Caco-2 (cell line): ENCODE measurements at regions of chr11 and their contacts with region 1.

Region 1: DNA sequence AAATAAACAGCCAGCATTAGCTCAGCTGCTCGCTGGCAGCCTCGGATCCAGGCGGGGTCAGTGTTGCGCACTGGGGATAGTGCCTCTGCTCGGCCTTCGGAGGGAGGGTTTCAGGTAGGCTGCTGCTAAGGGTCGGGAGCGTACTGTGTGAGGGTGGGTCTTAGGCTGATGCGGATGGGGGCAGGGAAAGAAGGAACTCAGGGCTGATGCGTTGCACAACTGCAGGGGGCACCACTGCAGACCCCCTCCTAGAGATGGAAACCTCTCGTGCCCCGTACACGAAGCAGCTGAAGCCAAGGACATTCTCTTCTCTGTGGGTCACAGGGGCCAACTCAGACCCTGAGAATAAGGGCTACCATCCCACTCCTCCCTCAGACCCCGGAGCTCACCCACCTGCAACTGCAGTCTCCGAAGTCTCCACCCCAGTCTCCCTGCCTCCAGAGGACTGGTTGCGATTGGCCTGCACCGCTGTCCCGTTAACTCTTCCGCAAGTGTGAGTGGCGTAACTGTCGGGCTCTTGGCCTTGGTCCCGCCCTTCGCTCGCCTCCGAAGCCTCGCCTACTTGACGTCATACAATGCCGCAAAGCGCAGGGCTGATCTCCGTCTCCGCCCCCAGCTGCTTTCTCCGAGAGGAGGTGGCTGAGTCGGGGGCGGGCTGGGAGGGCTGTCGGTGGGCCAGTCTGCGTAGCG is at the start of gene KBTBD3:
- DNase-seq: peak; percentile 100
- H3K4me3 ChIP-seq: peak within 1 kb of the TSS; percentile 99
- H3K4me3 Mint-ChIP-seq: peak within 1 kb of the TSS; percentile 94
- H3K27ac Mint-ChIP-seq: peak within 1 kb of the TSS; percentile 94
- H3K4me1 ChIP-seq: peaks cover 19% of the 10 kb centered on the region
- H3K4me1 Mint-ChIP-seq: peaks cover 18% of the 10 kb centered on the region
- H3K27me3 ChIP-seq: no peaks in the 10 kb centered on the region
- H3K27me3 Mint-ChIP-seq: no peaks in the 10 kb centered on the region
- CTCF ChIP-seq: peak; percentile 34 to 72
- total RNA-seq, gene KBTBD3: 3.2 and 5.6 TPM in 2 replicates

Region 2: GRCh38 chr11:105447936-105448702 is 628.9 kb before region 1 on chr11:
- CTCF ChIA-PET with region 1: no interaction called
- POLR2A ChIA-PET with region 1: no interaction called
- intact Hi-C with region 1: no loop called
- DNase-seq: no peak
- H3K4me3 ChIP-seq: no peak overlapping the region
- H3K4me3 Mint-ChIP-seq: no peak overlapping the region
- H3K27ac Mint-ChIP-seq: no peak overlapping the region
- H3K4me1 ChIP-seq: no peaks in the 10 kb centered on the region
- H3K4me1 Mint-ChIP-seq: no peaks in the 10 kb centered on the region
- H3K27me3 ChIP-seq: no peaks in the 10 kb centered on the region
- H3K27me3 Mint-ChIP-seq: no peaks in the 10 kb centered on the region
- CTCF ChIP-seq: no peak

Region 3: GRCh38 chr11:105953886-105954285 is 123.2 kb before region 1 on chr11:
- CTCF ChIA-PET with region 1: no interaction called
- POLR2A ChIA-PET with region 1: no interaction called
- intact Hi-C with region 1: loop called (anchors 5 kb)
- DNase-seq: no peak
- H3K4me3 ChIP-seq: no peak overlapping the region
- H3K4me3 Mint-ChIP-seq: no peak overlapping the region
- H3K27ac Mint-ChIP-seq: no peak overlapping the region
- H3K4me1 ChIP-seq: no peaks in the 10 kb centered on the region
- H3K4me1 Mint-ChIP-seq: no peaks in the 10 kb centered on the region
- H3K27me3 ChIP-seq: no peaks in the 10 kb centered on the region
- H3K27me3 Mint-ChIP-seq: no peaks in the 10 kb centered on the region
- CTCF ChIP-seq: no peak

Region 4: DNA sequence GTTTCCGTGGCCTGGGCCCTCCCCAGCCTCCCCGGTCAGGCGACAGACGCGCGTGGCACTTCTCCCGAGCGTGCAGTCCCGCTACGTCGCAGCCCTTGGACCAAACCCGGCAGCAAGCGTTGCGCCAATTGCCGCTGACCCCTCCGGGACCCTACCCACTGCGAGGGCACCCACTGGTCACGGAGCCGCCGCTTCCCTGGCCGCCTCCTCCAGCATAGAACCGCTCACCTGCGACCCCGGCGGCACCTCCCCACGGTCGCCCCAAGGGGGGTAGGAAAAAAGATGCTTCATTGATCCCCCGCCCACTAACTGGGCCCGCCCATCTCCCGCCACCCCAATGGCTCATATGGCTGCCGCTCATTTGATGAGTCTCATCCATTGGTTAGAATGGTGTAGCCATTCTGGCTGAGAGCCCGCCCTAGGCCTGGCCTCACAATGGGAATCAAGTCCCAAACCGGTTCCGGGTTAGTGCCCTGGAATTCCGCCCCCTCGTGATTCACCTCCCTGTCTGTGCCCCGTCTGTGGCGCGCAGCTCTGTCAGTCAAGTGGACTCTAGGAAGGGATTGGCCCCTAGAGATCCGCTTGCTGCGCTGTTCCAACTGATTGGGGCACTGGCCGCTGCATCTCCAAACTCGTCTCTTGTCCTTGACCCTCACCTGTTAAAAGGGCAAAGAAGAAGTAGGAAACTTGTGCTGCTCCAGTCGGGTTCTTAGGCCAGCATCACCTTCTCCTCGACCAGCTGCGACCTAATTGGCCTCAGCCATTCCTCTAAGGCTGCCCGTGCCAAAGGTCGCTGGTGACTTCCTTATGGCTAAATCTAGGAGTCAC is 54.9 kb before region 1 on chr11 and contains the start of gene MSANTD4:
- CTCF ChIA-PET with region 1: no interaction called
- POLR2A ChIA-PET with region 1: no interaction called
- intact Hi-C with region 1: loop called (anchors 1 kb)
- DNase-seq: peak; percentile 100
- H3K4me3 ChIP-seq: peak within 1 kb of the TSS; percentile 81
- H3K4me3 Mint-ChIP-seq: peak within 1 kb of the TSS; percentile 86
- H3K27ac Mint-ChIP-seq: peak within 1 kb of the TSS; percentile 51
- H3K4me1 ChIP-seq: peaks cover 11% of the 10 kb centered on the region
- H3K4me1 Mint-ChIP-seq: peaks cover 13% of the 10 kb centered on the region
- H3K27me3 ChIP-seq: no peaks in the 10 kb centered on the region
- H3K27me3 Mint-ChIP-seq: no peaks in the 10 kb centered on the region
- CTCF ChIP-seq: peak in 1 of 2 experiments; percentile 3
- total RNA-seq, gene MSANTD4: 24.2 and 25.7 TPM in 2 replicates

Region 5: DNA sequence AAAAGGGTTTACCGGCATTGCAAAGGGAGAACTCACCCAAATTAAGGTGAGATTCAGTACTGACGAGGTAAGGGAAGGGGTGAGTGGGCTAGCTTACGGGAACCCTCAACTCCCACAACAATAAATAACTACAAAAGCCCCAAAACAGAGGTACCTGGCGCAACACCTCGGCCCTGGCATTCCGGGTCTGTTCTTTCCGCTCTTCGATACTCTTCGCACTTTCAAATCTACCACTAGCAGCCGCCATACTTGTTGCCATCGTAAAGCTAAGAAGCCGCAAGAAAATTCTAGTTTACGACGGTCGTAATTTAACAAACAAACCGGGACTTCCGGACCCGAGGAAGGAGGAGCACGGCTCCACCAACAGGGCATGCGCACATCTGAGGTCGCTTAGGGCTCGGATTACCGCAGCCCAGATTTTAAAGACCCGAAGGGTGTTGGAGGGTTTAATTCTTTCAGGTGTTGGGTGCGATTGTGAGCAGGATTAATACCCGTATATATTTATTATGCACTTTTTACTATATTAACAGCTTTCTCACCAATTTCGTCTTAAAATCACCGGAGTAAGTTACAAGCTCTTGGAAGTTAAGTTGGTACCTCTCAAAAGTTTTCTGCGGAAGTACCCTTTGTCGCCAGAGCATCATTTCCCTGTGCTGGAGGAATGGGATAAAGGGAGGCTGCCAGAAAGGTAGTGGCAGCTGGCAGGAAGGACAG is 1380.7 kb after region 1 on chr11 and contains the start of gene CWF19L2:
- CTCF ChIA-PET with region 1: no interaction called
- POLR2A ChIA-PET with region 1: interaction called, 3 read pairs
- intact Hi-C with region 1: loop called (anchors 10 kb)
- DNase-seq: peak; percentile 95 to 96
- H3K4me3 ChIP-seq: peak within 1 kb of the TSS; percentile 73
- H3K4me3 Mint-ChIP-seq: peak within 1 kb of the TSS; percentile 93
- H3K27ac Mint-ChIP-seq: peak within 1 kb of the TSS; percentile 94
- H3K4me1 ChIP-seq: no peaks in the 10 kb centered on the region
- H3K4me1 Mint-ChIP-seq: peaks cover 26% of the 10 kb centered on the region
- H3K27me3 ChIP-seq: no peaks in the 10 kb centered on the region
- H3K27me3 Mint-ChIP-seq: peaks cover 5% of the 10 kb centered on the region
- CTCF ChIP-seq: no peak
- total RNA-seq, gene CWF19L2: 22.9 and 24.1 TPM in 2 replicates